ENCODE measurements at regions of chr11 and their contacts with region 1.

Region 1: DNA sequence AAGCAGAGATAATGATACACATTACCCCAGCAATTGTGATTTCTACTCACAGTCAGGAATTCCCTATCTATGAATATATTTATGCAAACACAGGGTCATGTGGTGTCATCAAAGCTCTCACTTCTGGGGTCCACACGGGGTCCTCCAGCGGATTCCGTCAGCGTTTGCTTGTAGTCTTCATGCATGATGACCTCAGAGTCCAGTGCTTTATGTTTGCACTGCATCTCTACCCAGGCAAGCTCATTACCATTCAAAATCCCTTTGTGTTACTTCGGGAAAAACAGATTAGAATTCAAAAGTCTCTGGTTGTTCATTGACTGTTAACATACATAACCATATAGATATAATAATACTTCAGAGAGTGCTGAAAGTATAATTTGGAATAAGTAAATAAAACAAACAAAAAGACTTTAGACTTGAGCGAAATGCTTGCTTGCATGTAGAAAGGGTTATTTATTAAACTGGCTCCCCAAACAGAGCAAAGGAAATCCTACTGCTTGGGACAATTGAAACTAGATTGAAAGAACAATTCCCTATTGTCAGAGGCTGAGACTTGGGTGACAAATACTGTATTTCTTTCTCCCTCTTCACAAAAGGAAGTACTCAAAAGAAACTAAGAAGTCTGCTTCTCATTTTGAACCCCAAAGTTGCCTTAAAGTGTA is 423.1 kb downstream of the ETS1 start:
- DNase-seq: no peak
- ATAC-seq: no peak
- H3K4me3 ChIP-seq: no peak overlapping the region
- H3K27ac ChIP-seq: no peak overlapping the region
- H3K4me1 ChIP-seq: peaks cover 0 to 5% (median 0%) of the 10 kb centered on the region in 9 donors
- H3K27me3 ChIP-seq: peaks cover 0 to 5% (median 0%) of the 10 kb centered on the region in 7 donors
- CTCF ChIP-seq: no peak

Region 2: DNA sequence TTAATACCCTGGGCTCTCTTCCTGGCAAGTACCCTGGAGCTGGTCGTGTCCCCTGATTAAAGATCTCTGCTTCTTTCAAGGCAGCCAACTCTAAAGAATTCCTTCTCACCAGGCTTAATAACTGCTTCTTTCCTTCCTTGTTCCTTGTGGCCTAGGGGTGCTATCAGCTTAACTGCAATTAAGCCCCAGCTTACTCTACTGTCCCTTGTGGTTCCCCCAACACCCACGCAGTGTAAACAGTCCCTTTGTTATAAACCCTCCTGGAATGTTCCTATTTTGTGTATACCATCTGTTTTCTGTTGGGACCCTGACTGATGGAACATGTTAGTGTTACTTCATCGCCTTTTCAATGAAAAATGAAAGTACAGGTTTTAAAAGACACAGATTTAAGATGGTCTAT is 1037.2 kb before region 1 on chr11:
- intact Hi-C with region 1: loop called in 1 of 10 experiments (anchors 5 kb)
- DNase-seq: no peak
- ATAC-seq: no peak
- H3K4me3 ChIP-seq: no peak overlapping the region
- H3K27ac ChIP-seq: no peak overlapping the region
- H3K4me1 ChIP-seq: no peaks in the 10 kb centered on the region
- H3K27me3 ChIP-seq: peaks cover 0 to 13% (median 0%) of the 10 kb centered on the region in 7 donors
- CTCF ChIP-seq: no peak

Region 3: DNA sequence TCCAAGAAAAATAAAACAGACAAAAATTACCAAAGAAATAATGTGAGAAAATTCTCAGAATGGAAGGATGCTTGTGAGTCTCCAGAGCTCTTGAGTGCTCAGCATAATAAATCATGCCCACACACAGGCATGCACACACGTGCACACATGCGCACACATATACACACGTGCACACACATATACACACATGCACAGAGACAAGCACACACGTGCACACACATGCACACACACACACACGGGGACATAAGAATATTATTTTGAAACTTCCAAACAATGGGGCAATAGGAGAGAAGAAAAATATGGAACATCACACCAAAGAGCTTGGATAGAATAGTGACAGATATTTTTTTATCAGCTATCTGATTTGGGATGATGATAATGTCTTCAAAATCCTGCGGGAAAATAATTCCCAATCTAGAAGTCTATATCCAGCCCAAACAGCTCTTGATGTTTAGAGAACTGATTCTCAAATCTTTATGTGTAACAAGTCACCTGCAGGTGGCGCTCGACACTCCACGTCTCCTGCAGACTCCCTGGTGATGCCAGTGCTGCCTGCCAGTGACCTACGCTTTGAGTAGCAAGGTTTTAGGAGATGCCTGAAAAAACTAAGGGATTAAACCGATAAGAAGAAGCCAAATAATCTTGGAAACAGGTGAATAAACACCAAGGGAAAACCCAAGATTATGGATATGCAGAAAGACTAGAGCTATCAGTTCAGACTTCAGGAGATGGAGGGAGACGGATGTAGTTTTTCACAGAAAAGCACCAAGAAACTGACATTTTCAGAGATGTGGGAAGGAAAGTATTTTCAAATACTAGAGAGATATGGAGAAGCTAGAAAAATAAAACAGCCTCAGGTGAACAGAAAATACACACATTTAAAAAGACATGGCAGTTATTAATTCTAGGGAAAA is 320.5 kb before region 1 on chr11:
- intact Hi-C with region 1: no loop called
- DNase-seq: peak; percentile 55 to 63
- ATAC-seq: no peak
- H3K4me3 ChIP-seq: no peak overlapping the region
- H3K27ac ChIP-seq: no peak overlapping the region
- H3K4me1 ChIP-seq: no peaks in the 10 kb centered on the region
- H3K27me3 ChIP-seq: peaks cover 0 to 5% (median 0%) of the 10 kb centered on the region in 7 donors
- CTCF ChIP-seq: peak; percentile 35 to 78 (median 65)

Region 4: DNA sequence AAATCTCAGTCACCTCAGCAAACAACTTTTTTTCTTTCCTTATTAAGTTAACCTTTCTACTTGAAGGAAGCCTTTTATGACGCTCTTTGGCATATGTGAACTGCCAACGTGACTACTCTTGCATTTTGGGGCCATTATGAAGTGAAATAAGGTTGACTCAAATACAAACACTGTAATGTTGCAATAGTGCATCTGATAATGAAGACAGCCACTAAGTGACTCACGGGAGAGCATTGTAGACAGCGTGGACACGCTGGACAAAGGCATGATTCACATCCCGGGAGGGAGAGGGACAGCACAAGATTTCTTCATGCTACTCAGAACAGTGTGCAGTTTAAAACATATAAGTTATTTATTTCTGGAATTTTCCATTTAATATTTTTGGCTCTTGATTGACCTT is 137.6 kb before region 1 on chr11:
- intact Hi-C with region 1: loop called in 7 of 10 experiments (anchors 2 to 10 kb)
- DNase-seq: no peak
- ATAC-seq: no peak
- H3K4me3 ChIP-seq: no peak overlapping the region
- H3K27ac ChIP-seq: no peak overlapping the region
- H3K4me1 ChIP-seq: peaks cover 0 to 12% (median 0%) of the 10 kb centered on the region in 9 donors
- H3K27me3 ChIP-seq: peaks cover 0 to 17% (median 3%) of the 10 kb centered on the region in 7 donors
- CTCF ChIP-seq: no peak

Region 5: DNA sequence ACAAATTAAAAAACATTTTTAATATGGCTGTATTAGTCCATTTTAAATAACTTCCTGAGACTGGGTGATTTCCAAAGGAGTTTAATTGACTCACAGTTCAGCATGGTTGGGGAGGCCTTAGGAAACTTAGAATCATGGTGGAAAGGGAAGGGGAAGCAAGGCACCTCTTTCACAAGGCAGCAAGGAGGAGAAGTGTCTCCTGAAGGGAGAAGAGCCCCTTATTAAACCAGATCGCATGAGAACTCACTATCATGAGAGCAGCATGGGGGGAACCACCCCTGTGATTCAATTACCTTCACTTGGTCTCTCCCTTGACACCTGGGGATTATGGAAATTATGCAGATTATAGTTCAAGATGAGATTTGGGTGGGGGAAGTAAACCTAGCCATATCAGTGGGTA is 65.4 kb before region 1 on chr11:
- intact Hi-C with region 1: no loop called
- DNase-seq: no peak
- ATAC-seq: no peak
- H3K4me3 ChIP-seq: no peak overlapping the region
- H3K27ac ChIP-seq: no peak overlapping the region
- H3K4me1 ChIP-seq: peaks cover 0 to 4% (median 0%) of the 10 kb centered on the region in 9 donors
- H3K27me3 ChIP-seq: peaks cover 0 to 3% (median 0%) of the 10 kb centered on the region in 7 donors
- CTCF ChIP-seq: no peak

Region 6: GRCh38 chr11:128472128-128473089 is 308.2 kb after region 1 on chr11:
- intact Hi-C with region 1: no loop called
- DNase-seq: no peak
- ATAC-seq: no peak
- H3K4me3 ChIP-seq: no peak overlapping the region
- H3K27ac ChIP-seq: peak overlapping the region in 7 of 10 donors; percentile 35 to 84 (median 50)
- H3K4me1 ChIP-seq: peaks cover 30 to 100% (median 96%) of the 10 kb centered on the region in 9 donors
- H3K27me3 ChIP-seq: no peaks in the 10 kb centered on the region
- CTCF ChIP-seq: no peak

Region 7: GRCh38 chr11:128848815-128849455 is 684.7 kb after region 1 on chr11:
- intact Hi-C with region 1: loop called in 3 of 10 experiments (anchors 5 to 10 kb)
- DNase-seq: peak; percentile 62 to 75
- ATAC-seq: peak in 5 of 8 donors; percentile 33 to 81 (median 47)
- H3K4me3 ChIP-seq: no peak overlapping the region
- H3K27ac ChIP-seq: no peak overlapping the region
- H3K4me1 ChIP-seq: peaks cover 0 to 20% (median 5%) of the 10 kb centered on the region in 9 donors
- H3K27me3 ChIP-seq: no peaks in the 10 kb centered on the region
- CTCF ChIP-seq: peak; percentile 26 to 82 (median 69)

Region 8: GRCh38 chr11:128859563-128860441 is 695.6 kb after region 1 on chr11:
- intact Hi-C with region 1: loop called in 2 of 10 experiments (anchors 5 to 10 kb)
- DNase-seq: peak; percentile 71 to 80
- ATAC-seq: peak; percentile 65 to 89 (median 86)
- H3K4me3 ChIP-seq: no peak overlapping the region
- H3K27ac ChIP-seq: peak overlapping the region in 4 of 10 donors; percentile 1 to 40 (median 22)
- H3K4me1 ChIP-seq: peaks cover 5 to 15% (median 10%) of the 10 kb centered on the region in 9 donors
- H3K27me3 ChIP-seq: no peaks in the 10 kb centered on the region
- CTCF ChIP-seq: peak; percentile 90 to 99 (median 96)